ENCODE measurements at regions of chr19 and their contacts with region 1.

Region 1: DNA sequence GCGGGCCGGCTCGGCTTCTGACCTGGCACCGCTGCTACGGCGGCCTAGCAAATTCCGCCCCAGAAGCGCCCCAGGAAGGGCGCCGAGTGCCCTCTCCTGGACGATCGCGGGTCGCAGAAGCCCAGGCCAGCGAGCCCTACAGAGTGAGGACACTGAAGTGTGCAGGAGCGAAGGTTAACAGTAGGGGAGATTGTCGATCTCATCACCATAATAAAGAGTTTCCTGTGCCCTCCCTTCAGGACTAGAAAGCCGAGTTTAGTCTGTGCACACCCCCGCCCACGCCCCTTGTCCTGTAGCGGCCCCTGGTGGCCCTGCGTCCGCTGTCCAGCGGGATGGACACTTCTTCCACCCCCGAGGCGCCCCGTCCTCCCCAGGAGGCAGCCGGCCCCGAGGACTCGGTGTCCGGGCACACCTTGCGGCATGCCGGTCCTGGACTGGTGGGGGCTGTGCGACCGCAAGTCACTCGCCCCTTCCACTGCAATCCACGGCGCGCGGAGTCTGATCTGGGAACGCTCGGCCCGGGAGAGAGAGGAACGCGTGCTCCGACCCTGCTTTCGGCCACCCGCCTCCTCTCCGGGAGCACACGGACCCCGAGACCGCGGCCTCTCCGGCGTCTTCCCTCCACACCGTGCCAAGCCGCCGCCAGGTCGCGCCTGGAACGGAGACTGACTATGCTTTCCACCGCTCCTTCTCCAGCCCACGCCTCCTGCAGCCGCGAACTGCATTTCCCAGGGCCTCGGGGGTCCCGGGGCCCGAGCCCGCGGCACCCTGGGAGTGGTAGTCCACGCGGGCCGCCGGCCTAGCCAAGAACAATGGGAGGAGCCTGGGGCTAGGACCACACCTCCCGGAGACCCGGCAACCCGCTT is 769 bp upstream of the KMT2B start:
- DNase-seq: peak; percentile 92 to 99 (median 96)
- ATAC-seq: peak; percentile 82
- H3K4me3 ChIP-seq: peak overlapping the region; percentile 77 to 84
- H3K4me3 Mint-ChIP-seq: peak overlapping the region; percentile 96
- H3K27ac ChIP-seq: peak overlapping the region; percentile 44 to 83
- H3K27ac Mint-ChIP-seq: peak overlapping the region; percentile 97
- H3K4me1 ChIP-seq: peaks cover 59% of the 10 kb centered on the region
- H3K4me1 Mint-ChIP-seq: peaks cover 62% of the 10 kb centered on the region
- H3K27me3 ChIP-seq: no peaks in the 10 kb centered on the region
- H3K27me3 Mint-ChIP-seq: no peaks in the 10 kb centered on the region
- CTCF ChIP-seq: peak; percentile 99

Region 2: GRCh38 chr19:35509861-35510625 is 207.0 kb before region 1 on chr19:
- CTCF ChIA-PET with region 1: interaction called, 5 read pairs
- POLR2A ChIA-PET with region 1: no interaction called
- intact Hi-C with region 1: loop called in 1 of 2 experiments (anchors 1 kb)
- DNase-seq: peak; percentile 56 to 84 (median 77)
- ATAC-seq: peak; percentile 75
- H3K4me3 ChIP-seq: peak overlapping the region; percentile 49 to 59
- H3K4me3 Mint-ChIP-seq: peak overlapping the region; percentile 70
- H3K27ac ChIP-seq: peak overlapping the region in 1 of 2 experiments; percentile 53
- H3K27ac Mint-ChIP-seq: no peak overlapping the region
- H3K4me1 ChIP-seq: peaks cover 18% of the 10 kb centered on the region
- H3K4me1 Mint-ChIP-seq: peaks cover 17% of the 10 kb centered on the region
- H3K27me3 ChIP-seq: peaks cover 0 to 7% of the 10 kb centered on the region in 2 experiments
- H3K27me3 Mint-ChIP-seq: peaks cover 44% of the 10 kb centered on the region
- CTCF ChIP-seq: peak; percentile 80

Region 3: GRCh38 chr19:35612559-35613321 is 104.3 kb before region 1 on chr19 and contains the start of gene HAUS5:
- CTCF ChIA-PET with region 1: no interaction called
- POLR2A ChIA-PET with region 1: no interaction called
- intact Hi-C with region 1: loop called in 1 of 2 experiments (anchors 1 kb)
- DNase-seq: peak; percentile 90 to 99 (median 96)
- ATAC-seq: peak; percentile 91
- H3K4me3 ChIP-seq: peak within 1 kb of the TSS; percentile 87 to 91
- H3K4me3 Mint-ChIP-seq: peak within 1 kb of the TSS; percentile 86
- H3K27ac ChIP-seq: peak within 1 kb of the TSS; percentile 78 to 81
- H3K27ac Mint-ChIP-seq: peak within 1 kb of the TSS; percentile 94
- H3K4me1 ChIP-seq: peaks cover 26% of the 10 kb centered on the region
- H3K4me1 Mint-ChIP-seq: peaks cover 35% of the 10 kb centered on the region
- H3K27me3 ChIP-seq: no peaks in the 10 kb centered on the region
- H3K27me3 Mint-ChIP-seq: no peaks in the 10 kb centered on the region
- CTCF ChIP-seq: no peak
- total RNA-seq, gene HAUS5: 24.0 to 27.7 TPM

Region 4: GRCh38 chr19:35648017-35648961 is 68.7 kb before region 1 on chr19 and contains the start of gene COX6B1:
- CTCF ChIA-PET with region 1: no interaction called
- POLR2A ChIA-PET with region 1: no interaction called
- intact Hi-C with region 1: loop called (anchors 1 to 5 kb)
- DNase-seq: peak; percentile 83 to 98 (median 90)
- ATAC-seq: peak; percentile 72
- H3K4me3 ChIP-seq: peak within 1 kb of the TSS; percentile 70 to 82
- H3K4me3 Mint-ChIP-seq: peak within 1 kb of the TSS; percentile 99
- H3K27ac ChIP-seq: peak within 1 kb of the TSS; percentile 66 to 80
- H3K27ac Mint-ChIP-seq: peak within 1 kb of the TSS; percentile 97
- H3K4me1 ChIP-seq: peaks cover 32% of the 10 kb centered on the region
- H3K4me1 Mint-ChIP-seq: peaks cover 52% of the 10 kb centered on the region
- H3K27me3 ChIP-seq: no peaks in the 10 kb centered on the region
- H3K27me3 Mint-ChIP-seq: no peaks in the 10 kb centered on the region
- CTCF ChIP-seq: no peak
- total RNA-seq, gene COX6B1: 152 to 171 TPM

Region 5: DNA sequence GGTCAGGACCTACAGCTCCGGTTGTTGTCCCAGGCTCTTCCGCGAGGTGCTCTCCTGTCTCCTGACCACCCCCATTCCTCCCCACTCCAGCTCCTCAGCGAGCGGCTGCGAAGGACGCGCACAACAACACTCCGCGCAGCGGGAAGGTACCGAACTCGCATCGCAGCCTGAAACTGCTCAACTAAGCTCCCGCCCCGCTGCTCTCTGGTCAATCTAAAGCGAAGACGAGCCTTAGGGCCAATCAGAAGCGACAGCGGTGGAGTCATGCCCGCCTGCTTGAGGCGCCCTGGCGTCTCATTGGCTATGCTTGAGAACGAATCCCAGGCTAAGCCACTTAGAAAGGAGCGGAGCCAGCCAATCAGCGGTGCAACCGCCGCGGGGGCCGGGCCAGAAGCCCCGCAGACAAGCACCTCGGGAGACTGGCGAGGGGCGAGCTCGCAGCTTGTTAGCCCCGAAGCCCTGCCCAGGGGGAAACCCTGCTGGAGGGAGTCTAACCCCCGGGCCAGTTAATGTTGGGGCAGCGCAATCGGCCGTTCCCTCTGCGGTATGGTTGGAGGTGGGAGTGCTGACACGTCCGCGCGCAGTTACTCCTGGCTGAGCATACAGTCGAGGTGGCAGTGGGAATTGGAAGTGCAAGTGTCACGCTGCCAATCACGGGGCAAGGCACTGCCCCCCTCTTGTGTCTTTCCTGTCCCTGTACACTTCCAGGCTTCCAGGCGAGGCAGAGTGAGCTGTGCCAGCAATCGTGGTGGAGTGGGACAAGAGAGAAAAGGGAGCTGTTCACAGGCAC is 14.6 kb before region 1 on chr19:
- CTCF ChIA-PET with region 1: interaction called, 6 read pairs
- POLR2A ChIA-PET with region 1: interaction called, 22 read pairs
- intact Hi-C with region 1: loop called (anchors 1 kb)
- DNase-seq: peak; percentile 79 to 98 (median 92)
- ATAC-seq: peak; percentile 99
- H3K4me3 ChIP-seq: peak overlapping the region; percentile 71 to 79
- H3K4me3 Mint-ChIP-seq: peak overlapping the region; percentile 92
- H3K27ac ChIP-seq: peak overlapping the region in 1 of 2 experiments; percentile 41
- H3K27ac Mint-ChIP-seq: peak overlapping the region; percentile 92
- H3K4me1 ChIP-seq: peaks cover 4% of the 10 kb centered on the region
- H3K4me1 Mint-ChIP-seq: peaks cover 7% of the 10 kb centered on the region
- H3K27me3 ChIP-seq: no peaks in the 10 kb centered on the region
- H3K27me3 Mint-ChIP-seq: no peaks in the 10 kb centered on the region
- CTCF ChIP-seq: no peak

Region 6: DNA sequence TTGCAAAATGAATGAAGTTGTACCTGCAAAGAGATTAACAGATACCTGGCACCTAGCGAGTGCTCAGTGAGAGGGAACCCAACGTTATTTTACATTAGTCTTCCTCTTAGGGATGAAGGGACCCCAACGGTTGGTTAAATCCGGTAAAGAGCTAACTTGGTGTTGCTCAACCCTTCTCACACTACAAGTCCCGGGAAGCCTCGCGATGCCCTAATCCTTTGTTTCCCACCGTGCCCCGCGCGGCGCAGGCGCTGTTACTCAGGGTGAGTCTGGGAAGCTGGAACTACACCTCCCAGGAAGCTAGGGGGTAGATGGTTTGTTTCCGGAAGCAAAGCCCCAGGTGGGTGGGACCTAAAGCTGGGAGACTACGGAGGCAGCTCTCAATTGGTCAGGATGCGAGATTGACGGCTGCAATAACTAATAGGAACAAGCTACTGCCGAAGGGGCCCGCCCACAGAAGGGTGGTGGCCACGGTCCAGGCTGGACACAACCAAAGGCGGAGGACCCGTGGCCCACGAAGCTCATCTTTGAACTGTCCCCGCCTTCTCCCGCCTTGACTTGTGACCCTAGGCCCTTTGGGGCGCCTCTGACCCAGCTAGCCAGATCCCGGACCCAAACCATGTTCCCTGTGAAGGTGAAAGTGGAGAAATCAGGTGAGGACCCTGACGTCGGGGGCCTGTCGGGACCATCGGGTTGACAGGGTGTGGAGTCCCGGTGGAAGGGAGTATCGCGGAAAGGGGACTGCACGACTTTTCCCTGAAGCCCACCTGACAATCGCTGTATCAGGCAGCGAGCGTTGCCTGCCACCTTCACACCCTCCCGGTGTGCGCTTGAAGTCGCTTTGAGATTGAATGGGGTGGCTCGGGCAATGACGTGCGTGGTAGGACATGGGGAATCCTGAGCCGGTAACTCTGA is 31.3 kb after region 1 on chr19 and contains the start of gene LIN37:
- CTCF ChIA-PET with region 1: interaction called, 3 read pairs
- POLR2A ChIA-PET with region 1: interaction called, 7 read pairs
- intact Hi-C with region 1: loop called (anchors 1 kb)
- DNase-seq: peak; percentile 97 to 100 (median 98)
- ATAC-seq: peak; percentile 72
- H3K4me3 ChIP-seq: peak within 1 kb of the TSS; percentile 84 to 99
- H3K4me3 Mint-ChIP-seq: peak within 1 kb of the TSS; percentile 98
- H3K27ac ChIP-seq: peak within 1 kb of the TSS; percentile 71 to 84
- H3K27ac Mint-ChIP-seq: peak within 1 kb of the TSS; percentile 95
- H3K4me1 ChIP-seq: peaks cover 41% of the 10 kb centered on the region
- H3K4me1 Mint-ChIP-seq: peaks cover 44% of the 10 kb centered on the region
- H3K27me3 ChIP-seq: no peaks in the 10 kb centered on the region
- H3K27me3 Mint-ChIP-seq: no peaks in the 10 kb centered on the region
- CTCF ChIP-seq: no peak
- total RNA-seq, gene LIN37: 5.5 to 9.3 TPM

Region 7: DNA sequence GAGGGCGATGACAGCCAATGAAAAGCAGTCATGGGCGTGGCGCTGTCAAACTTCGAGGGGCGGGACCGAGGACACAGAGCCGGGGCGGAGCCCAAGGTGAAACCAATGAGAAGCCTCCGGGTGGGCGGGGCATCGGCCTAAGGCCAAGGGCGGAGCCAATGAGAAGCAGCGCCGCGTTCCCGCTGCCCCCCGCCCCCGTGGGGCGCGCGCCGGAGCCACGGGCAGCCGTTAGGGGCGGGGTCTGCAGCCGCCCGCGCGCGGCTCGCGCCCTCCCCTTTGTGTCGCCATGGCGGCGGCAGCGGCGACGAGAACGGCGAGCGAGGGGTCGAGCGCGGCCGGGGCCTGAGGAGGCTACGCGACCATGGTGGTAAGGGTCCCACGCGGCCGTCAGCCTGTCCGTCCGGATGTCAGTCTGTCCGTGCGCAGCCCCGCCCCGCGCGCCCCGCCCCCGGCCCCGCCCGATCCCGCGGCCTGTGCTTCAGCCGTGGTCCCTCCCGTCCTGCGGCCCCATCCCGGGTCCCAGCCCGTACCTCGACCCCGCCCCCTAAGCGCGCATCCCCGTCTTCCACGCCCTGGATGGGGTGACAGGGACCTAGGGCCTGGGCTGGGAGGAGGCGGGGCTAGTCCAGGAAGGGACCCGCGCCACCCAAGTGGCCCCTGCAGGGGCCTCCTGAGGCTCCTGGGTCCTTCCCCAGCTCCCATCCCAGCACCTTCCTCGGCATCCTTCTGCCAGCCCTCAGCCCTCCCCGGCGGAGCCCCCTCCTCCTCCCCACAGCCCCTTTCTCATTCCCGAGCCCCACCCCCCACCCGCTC is 58.5 kb after region 1 on chr19 and contains the start of gene ARHGAP33:
- CTCF ChIA-PET with region 1: no interaction called
- POLR2A ChIA-PET with region 1: no interaction called
- intact Hi-C with region 1: loop called (anchors 1 kb)
- DNase-seq: peak; percentile 94 to 99 (median 98)
- ATAC-seq: peak; percentile 99
- H3K4me3 ChIP-seq: peak within 1 kb of the TSS; percentile 54 to 60
- H3K4me3 Mint-ChIP-seq: peak within 1 kb of the TSS; percentile 84
- H3K27ac ChIP-seq: no peak within 1 kb of the TSS
- H3K27ac Mint-ChIP-seq: no peak within 1 kb of the TSS
- H3K4me1 ChIP-seq: peaks cover 12% of the 10 kb centered on the region
- H3K4me1 Mint-ChIP-seq: peaks cover 21% of the 10 kb centered on the region
- H3K27me3 ChIP-seq: no peaks in the 10 kb centered on the region
- H3K27me3 Mint-ChIP-seq: no peaks in the 10 kb centered on the region
- CTCF ChIP-seq: no peak
- total RNA-seq, gene ARHGAP33: 8.7 to 10.6 TPM